IMR-90 (cell line): ENCODE measurements at regions of chr12 and their contacts with region 1.

Region 1: DNA sequence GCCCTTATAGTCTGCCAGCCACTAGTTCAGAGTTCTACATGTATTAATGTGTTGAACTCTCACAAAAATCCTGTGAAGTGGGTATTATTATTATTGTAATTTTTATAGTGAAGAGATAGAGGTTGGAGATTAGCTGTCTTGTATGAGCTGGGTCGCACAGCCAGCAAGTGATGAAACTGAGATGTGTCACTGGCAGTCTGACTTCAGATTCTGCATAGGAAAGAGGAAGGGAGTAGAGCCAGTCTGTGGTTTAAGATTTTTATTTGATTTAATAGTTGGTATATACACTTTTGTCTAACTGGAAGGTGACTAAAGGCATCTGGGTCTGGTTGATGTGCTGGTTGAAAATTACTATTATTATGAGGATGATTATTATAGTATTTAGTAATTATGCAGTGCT is 5.8 kb upstream of the FRS2 start:
- DNase-seq: peak; percentile 11
- ATAC-seq: no peak
- H3K4me3 ChIP-seq: no peak overlapping the region
- H3K27ac ChIP-seq: no peak overlapping the region
- H3K4me1 ChIP-seq: no peaks in the 10 kb centered on the region
- H3K27me3 ChIP-seq: no peaks in the 10 kb centered on the region
- CTCF ChIP-seq: no peak
- POLR2A ChIP-seq: no peak
- RAD21 ChIP-seq: no peak

Region 2: GRCh38 chr12:69428351-69429065 is 35.9 kb before region 1 on chr12:
- CTCF ChIA-PET with region 1: interaction called, 4 read pairs
- POLR2A ChIA-PET with region 1: no interaction called
- dilution Hi-C with region 1: no loop called
- in situ Hi-C with region 1: loop called (anchors 5 kb)
- intact Hi-C with region 1: loop called (anchors 5 kb)
- DNase-seq: peak; percentile 3
- ATAC-seq: peak; percentile 17; the same call in 1 of the 2 replicates
- H3K4me3 ChIP-seq: no peak overlapping the region
- H3K27ac ChIP-seq: no peak overlapping the region
- H3K4me1 ChIP-seq: no peaks in the 10 kb centered on the region
- H3K27me3 ChIP-seq: no peaks in the 10 kb centered on the region
- CTCF ChIP-seq: no peak
- POLR2A ChIP-seq: no peak
- RAD21 ChIP-seq: no peak